Sciatic nerve (tissue), 2 donors: ENCODE measurements at regions of chr7 and their contacts with region 1.

Region 1: GRCh38 chr7:4883374-4884144 is at the start of gene RADIL:
- DNase-seq: peak; percentile 98
- ATAC-seq: peak; percentile 94
- total RNA-seq, gene RADIL: 19.8 TPM

Region 2: GRCh38 chr7:4799508-4800268 is 83.9 kb before region 1 on chr7:
- intact Hi-C with region 1: loop called (anchors 5 kb)
- DNase-seq: peak; percentile 82
- ATAC-seq: peak; percentile 80

Region 3: GRCh38 chr7:4854916-4855315 is 28.6 kb before region 1 on chr7:
- intact Hi-C with region 1: loop called (anchors 2 kb)
- DNase-seq: no peak
- ATAC-seq: no peak

Region 4: DNA sequence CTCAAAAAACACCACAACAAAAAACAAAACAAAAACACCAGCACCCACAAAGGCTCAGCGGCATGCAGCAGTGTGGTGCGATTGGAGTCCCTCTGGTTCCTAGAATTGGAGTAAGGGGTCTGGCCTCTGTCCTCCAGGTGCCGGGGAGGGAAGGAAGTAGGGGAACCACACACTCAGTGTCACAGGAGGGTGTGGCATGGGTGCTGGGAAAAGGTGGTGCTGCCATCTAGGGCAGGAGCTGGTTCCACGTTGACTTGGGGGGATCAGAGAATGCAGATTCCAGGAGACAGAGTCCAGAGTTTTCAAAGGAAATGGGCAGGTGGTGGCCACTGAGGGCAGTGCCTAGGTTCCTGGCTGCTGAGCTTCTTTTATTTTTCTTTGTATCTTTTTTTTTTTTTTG is 286.7 kb after region 1 on chr7:
- intact Hi-C with region 1: no loop called
- DNase-seq: no peak
- ATAC-seq: no peak